ENCODE measurements at regions of chr20 and their contacts with region 1.

Region 1: GRCh38 chr20:12012241-12013222 is 94.8 kb downstream of the BTBD3 start:
- DNase-seq: peak in 1 of 2 donors; percentile 18
- ATAC-seq: peak in 3 of 8 donors; percentile 37 to 51 (median 42)
- H3K4me3 ChIP-seq: no peak overlapping the region
- H3K27ac ChIP-seq: no peak overlapping the region
- H3K4me1 ChIP-seq: peaks cover 0 to 27% (median 4%) of the 10 kb centered on the region in 9 donors
- H3K27me3 ChIP-seq: no peaks in the 10 kb centered on the region
- CTCF ChIP-seq: peak; percentile 48 to 93 (median 74)

Region 2: GRCh38 chr20:12311094-12311865 is 298.7 kb after region 1 on chr20:
- intact Hi-C with region 1: loop called in 1 of 10 experiments (anchors 5 kb)
- DNase-seq: peak in 1 of 2 donors; percentile 8
- ATAC-seq: peak; percentile 30 to 87 (median 63)
- H3K4me3 ChIP-seq: no peak overlapping the region
- H3K27ac ChIP-seq: peak overlapping the region in 3 of 10 donors; percentile 6 to 44 (median 20)
- H3K4me1 ChIP-seq: peaks cover 0 to 7% (median 0%) of the 10 kb centered on the region in 9 donors
- H3K27me3 ChIP-seq: no peaks in the 10 kb centered on the region
- CTCF ChIP-seq: no peak